ENCODE measurements at regions of chr19 and their contacts with region 1.

Region 1: GRCh38 chr19:7925171-7925851 is 624 bp downstream of the CTXN1 start:
- DNase-seq: peak in 1 of 2 donors; percentile 94
- H3K4me3 ChIP-seq: peak overlapping the region; percentile 11
- CTCF ChIP-seq: no peak
- POLR2A ChIP-seq: no peak

Region 2: DNA sequence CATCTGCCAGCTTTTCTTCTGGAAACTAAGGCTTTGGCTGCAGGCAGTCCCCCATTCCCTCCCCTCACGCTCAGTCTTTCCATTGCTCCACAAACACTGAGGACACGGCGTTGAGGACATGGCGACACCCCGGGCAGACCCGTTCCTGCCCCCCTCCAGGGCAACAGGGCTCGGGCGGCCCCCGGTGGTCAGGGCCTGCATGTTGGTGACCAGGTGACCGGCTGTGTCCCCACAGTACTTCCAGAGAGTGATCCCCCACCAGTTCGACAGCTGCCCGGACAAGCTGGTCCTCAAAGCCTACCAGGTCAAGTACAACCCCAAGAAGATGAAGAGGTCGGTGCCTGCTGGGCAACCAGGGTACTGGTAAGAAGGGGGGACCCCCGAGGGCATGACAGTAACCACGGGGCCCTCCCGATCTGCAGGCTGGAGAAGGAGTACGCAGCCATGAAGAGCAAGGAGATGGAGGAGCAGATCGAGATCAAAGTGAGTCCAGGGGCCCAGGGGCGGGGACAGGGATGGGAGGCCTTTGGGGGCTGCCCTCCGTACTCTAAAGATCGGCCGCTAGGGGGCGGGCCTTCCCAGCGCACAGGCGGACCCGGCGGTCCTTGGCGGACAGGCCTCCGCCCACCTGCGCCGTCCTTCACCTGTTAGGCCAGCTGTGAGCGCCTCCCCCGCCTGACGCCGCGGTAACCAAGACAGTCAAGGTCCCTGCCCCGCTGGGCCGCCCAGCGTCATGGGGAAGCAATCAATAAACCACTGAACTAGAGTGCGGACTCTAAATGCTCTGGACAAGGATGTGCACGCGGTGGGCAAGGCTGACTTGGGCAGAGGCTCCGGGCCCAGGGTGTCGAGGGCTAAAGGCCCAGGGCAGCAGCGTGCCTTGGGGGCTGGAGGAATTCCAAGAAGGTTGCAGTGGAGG is 72.2 kb before region 1 on chr19:
- intact Hi-C with region 1: loop called (anchors 5 kb)
- DNase-seq: no peak
- H3K4me3 ChIP-seq: no peak overlapping the region
- CTCF ChIP-seq: peak in 1 of 3 donors; percentile 7
- POLR2A ChIP-seq: no peak

Region 3: DNA sequence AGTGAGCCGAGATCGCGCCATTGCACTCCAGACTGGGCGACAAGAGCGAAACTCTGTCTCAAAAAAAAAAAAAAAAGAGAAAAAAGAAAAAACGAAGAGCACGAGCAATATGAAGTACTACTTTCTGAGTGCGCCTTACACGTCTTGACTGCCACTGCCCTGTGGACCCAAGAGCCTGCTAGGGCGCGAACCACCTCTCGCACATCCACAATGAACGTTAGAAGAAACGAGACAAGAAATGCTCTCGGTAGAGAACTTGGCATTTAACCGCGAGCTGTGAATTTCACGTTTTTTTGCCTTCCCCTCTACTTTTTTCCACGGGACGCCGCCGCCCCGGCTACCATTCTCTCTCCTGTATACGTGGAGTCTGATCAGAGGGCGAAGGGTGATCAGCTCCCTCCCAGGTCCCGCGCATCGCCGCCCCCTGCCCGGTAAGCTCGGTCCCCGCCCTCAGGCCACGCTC is 17.7 kb after region 1 on chr19:
- intact Hi-C with region 1: loop called (anchors 1 kb)
- DNase-seq: no peak
- H3K4me3 ChIP-seq: peak overlapping the region; percentile 95
- CTCF ChIP-seq: no peak
- POLR2A ChIP-seq: no peak